ENCODE measurements at regions of chr1 and their contacts with region 1.

Region 1: GRCh38 chr1:244835276-244836134 is at the start of gene COX20:
- DNase-seq: peak; percentile 93 to 96
- H3K4me3 ChIP-seq: peak within 1 kb of the TSS; percentile 95
- H3K4me3 Mint-ChIP-seq: peak within 1 kb of the TSS; percentile 97
- H3K27ac Mint-ChIP-seq: peak within 1 kb of the TSS; percentile 100
- H3K4me1 ChIP-seq: peaks cover 31% of the 10 kb centered on the region
- H3K4me1 Mint-ChIP-seq: peaks cover 20% of the 10 kb centered on the region
- H3K27me3 ChIP-seq: no peaks in the 10 kb centered on the region
- H3K27me3 Mint-ChIP-seq: no peaks in the 10 kb centered on the region
- CTCF ChIP-seq: no peak
- total RNA-seq, gene COX20: 68.0 and 79.3 TPM in 2 replicates

Region 2: GRCh38 chr1:244652699-244653466 is 182.6 kb before region 1 on chr1 and contains the start of gene DESI2:
- CTCF ChIA-PET with region 1: no interaction called
- POLR2A ChIA-PET with region 1: no interaction called
- intact Hi-C with region 1: loop called (anchors 1 kb)
- DNase-seq: peak; percentile 98 to 99
- H3K4me3 ChIP-seq: peak within 1 kb of the TSS; percentile 93
- H3K4me3 Mint-ChIP-seq: no peak within 1 kb of the TSS
- H3K27ac Mint-ChIP-seq: peak within 1 kb of the TSS; percentile 42
- H3K4me1 ChIP-seq: peaks cover 22% of the 10 kb centered on the region
- H3K4me1 Mint-ChIP-seq: peaks cover 15% of the 10 kb centered on the region
- H3K27me3 ChIP-seq: no peaks in the 10 kb centered on the region
- H3K27me3 Mint-ChIP-seq: no peaks in the 10 kb centered on the region
- CTCF ChIP-seq: peak; percentile 30 to 50
- total RNA-seq, gene DESI2: 47.7 and 51.0 TPM in 2 replicates

Region 3: GRCh38 chr1:244802041-244802440 is 33.5 kb before region 1 on chr1:
- CTCF ChIA-PET with region 1: no interaction called
- POLR2A ChIA-PET with region 1: no interaction called
- intact Hi-C with region 1: loop called (anchors 2 kb)
- DNase-seq: peak; percentile 47 to 75
- H3K4me3 ChIP-seq: no peak overlapping the region
- H3K4me3 Mint-ChIP-seq: peak overlapping the region; percentile 42
- H3K27ac Mint-ChIP-seq: peak overlapping the region; percentile 71
- H3K4me1 ChIP-seq: peaks cover 15% of the 10 kb centered on the region
- H3K4me1 Mint-ChIP-seq: peaks cover 12% of the 10 kb centered on the region
- H3K27me3 ChIP-seq: no peaks in the 10 kb centered on the region
- H3K27me3 Mint-ChIP-seq: no peaks in the 10 kb centered on the region
- CTCF ChIP-seq: no peak

Region 4: GRCh38 chr1:244864253-244865027 is 28.9 kb after region 1 on chr1 and contains the start of gene HNRNPU:
- CTCF ChIA-PET with region 1: no interaction called
- POLR2A ChIA-PET with region 1: interaction called, 23 read pairs
- intact Hi-C with region 1: loop called (anchors 1 kb)
- DNase-seq: peak; percentile 95 to 97
- H3K4me3 ChIP-seq: peak within 1 kb of the TSS; percentile 97
- H3K4me3 Mint-ChIP-seq: peak within 1 kb of the TSS; percentile 94
- H3K27ac Mint-ChIP-seq: peak within 1 kb of the TSS; percentile 83
- H3K4me1 ChIP-seq: peaks cover 7% of the 10 kb centered on the region; the same call in 1 of the 2 replicates
- H3K4me1 Mint-ChIP-seq: peaks cover 22% of the 10 kb centered on the region
- H3K27me3 ChIP-seq: no peaks in the 10 kb centered on the region
- H3K27me3 Mint-ChIP-seq: no peaks in the 10 kb centered on the region
- CTCF ChIP-seq: peak; percentile 28 to 30
- total RNA-seq, gene HNRNPU: 478 and 482 TPM in 2 replicates

Region 5: DNA sequence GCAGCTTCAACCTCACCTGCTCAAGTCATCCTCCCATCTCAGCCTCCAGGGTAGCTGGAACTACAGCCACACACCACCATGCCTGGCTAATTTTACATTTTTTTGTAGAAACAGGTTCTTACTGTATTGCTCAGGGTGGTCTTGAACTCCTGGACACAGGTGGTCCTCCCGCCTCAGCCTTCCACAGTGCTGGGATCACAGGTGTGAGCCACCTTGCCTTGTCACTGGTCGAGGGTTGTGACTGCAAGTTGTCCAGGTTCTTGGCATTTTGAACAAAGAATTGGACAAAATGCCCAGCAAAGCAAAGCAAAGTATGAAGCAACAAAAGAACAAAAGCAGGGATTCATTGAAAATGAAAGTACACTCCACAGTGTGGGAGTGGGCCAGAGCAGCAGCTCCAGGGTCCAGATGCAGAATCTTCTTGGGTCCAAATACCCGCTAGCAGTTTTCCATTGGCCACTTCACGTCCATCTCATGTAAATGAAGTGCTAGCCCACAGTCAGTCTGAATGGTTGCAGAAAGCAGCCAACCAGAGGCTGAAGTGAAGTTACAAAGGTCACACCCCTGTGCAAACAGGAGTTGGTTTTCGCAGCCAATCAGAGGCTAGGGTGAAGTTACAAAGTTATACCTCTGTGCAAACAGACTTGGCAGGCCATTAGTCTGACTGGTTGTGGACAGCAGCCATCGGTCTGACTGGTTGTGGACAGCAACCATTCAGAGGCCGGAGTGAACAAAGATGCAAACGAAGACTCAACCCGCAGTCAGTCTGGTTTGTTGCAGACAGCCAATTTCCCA is 209.8 kb after region 1 on chr1:
- CTCF ChIA-PET with region 1: interaction called, 9 read pairs
- POLR2A ChIA-PET with region 1: interaction called, 4 read pairs
- intact Hi-C with region 1: loop called (anchors 2 kb)
- DNase-seq: peak; percentile 88 to 94
- H3K4me3 ChIP-seq: peak overlapping the region; percentile 13; the same call in 1 of the 2 replicates
- H3K4me3 Mint-ChIP-seq: peak overlapping the region; percentile 47
- H3K27ac Mint-ChIP-seq: peak overlapping the region; percentile 39
- H3K4me1 ChIP-seq: peaks cover 54% of the 10 kb centered on the region
- H3K4me1 Mint-ChIP-seq: peaks cover 37% of the 10 kb centered on the region
- H3K27me3 ChIP-seq: no peaks in the 10 kb centered on the region
- H3K27me3 Mint-ChIP-seq: no peaks in the 10 kb centered on the region
- CTCF ChIP-seq: no peak

Region 6: GRCh38 chr1:245216366-245217115 is 381.0 kb after region 1 on chr1:
- CTCF ChIA-PET with region 1: no interaction called
- POLR2A ChIA-PET with region 1: no interaction called
- intact Hi-C with region 1: no loop called
- DNase-seq: no peak
- H3K4me3 ChIP-seq: no peak overlapping the region
- H3K4me3 Mint-ChIP-seq: no peak overlapping the region
- H3K27ac Mint-ChIP-seq: no peak overlapping the region
- H3K4me1 ChIP-seq: no peaks in the 10 kb centered on the region
- H3K4me1 Mint-ChIP-seq: no peaks in the 10 kb centered on the region
- H3K27me3 ChIP-seq: no peaks in the 10 kb centered on the region
- H3K27me3 Mint-ChIP-seq: no peaks in the 10 kb centered on the region
- CTCF ChIP-seq: no peak

Measured in Caco-2 (cell line).